Activated CD4-positive, alpha-beta T cell treated with anti-CD3 and anti-CD28 coated beads for 36 hours (primary cell): ENCODE measurements at regions of chr6 and their contacts with region 1.

Region 1: GRCh38 chr6:133512410-133513016 is 271.4 kb downstream of the EYA4 start:
- DNase-seq: peak; percentile 58
- ATAC-seq: no peak
- H3K4me3 Mint-ChIP-seq: no peak overlapping the region
- H3K27ac Mint-ChIP-seq: no peak overlapping the region
- H3K4me1 Mint-ChIP-seq: no peaks in the 10 kb centered on the region
- H3K27me3 Mint-ChIP-seq: peaks cover 21% of the 10 kb centered on the region

Region 2: GRCh38 chr6:132820629-132821381 is 691.7 kb before region 1 on chr6:
- CTCF ChIA-PET with region 1: no interaction called
- POLR2A ChIA-PET with region 1: no interaction called
- intact Hi-C with region 1: loop called (anchors 2 to 5 kb)
- DNase-seq: no peak
- ATAC-seq: peak; percentile 10
- H3K4me3 Mint-ChIP-seq: no peak overlapping the region
- H3K27ac Mint-ChIP-seq: peak overlapping the region; percentile 61
- H3K4me1 Mint-ChIP-seq: peaks cover 48% of the 10 kb centered on the region
- H3K27me3 Mint-ChIP-seq: no peaks in the 10 kb centered on the region

Region 3: DNA sequence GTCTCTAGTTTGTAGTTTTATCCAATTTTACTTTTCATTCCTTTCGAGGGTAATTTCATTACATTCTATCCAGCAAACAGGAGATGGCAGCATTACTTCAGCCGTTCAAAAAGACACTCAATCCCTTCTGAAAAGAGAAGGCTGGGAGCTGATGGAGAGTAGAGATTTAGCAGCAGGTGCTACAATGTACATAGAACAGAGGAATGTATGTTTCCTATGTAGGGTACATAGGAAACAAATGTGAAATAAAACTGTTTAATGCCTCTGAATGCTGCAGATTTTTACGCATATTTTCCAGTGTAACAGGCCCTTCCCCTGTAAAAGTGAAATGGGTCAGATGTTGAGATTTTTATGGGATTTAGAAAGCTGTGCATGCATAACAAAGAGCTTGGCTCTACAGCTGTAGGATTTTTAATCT is 682.2 kb before region 1 on chr6:
- CTCF ChIA-PET with region 1: interaction called, 3 read pairs
- POLR2A ChIA-PET with region 1: no interaction called
- intact Hi-C with region 1: loop called in 1 of 2 experiments (anchors 2 kb)
- DNase-seq: peak; percentile 8
- ATAC-seq: no peak
- H3K4me3 Mint-ChIP-seq: no peak overlapping the region
- H3K27ac Mint-ChIP-seq: no peak overlapping the region
- H3K4me1 Mint-ChIP-seq: no peaks in the 10 kb centered on the region
- H3K27me3 Mint-ChIP-seq: peaks cover 2% of the 10 kb centered on the region

Region 4: DNA sequence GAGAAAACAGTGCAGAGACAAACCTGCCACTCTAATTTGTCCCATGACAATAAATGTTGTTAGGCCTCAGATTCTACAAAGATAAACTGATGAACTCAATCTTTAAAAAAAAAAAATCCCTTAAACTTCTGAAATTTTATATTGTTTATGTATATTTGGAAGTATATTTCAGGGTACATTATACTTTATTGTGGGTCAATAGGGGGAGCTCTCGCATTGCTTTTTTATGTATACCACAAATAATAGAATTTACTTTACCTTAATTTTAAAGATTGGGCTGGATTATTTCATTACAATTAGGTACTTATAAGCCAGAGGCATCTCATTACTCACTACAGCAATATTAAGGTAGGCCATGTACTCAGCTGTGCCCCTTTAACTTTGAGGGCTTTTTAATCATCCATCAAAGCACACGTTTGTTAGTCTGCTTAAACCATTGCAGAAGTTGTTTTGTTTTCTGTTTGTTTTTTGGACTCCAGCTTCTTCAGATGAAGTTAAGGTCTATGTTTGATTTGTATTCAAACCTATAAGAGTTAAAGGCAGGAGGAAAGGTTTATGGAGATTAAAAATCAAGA is 327.6 kb before region 1 on chr6:
- CTCF ChIA-PET with region 1: interaction called, 3 read pairs
- POLR2A ChIA-PET with region 1: no interaction called
- intact Hi-C with region 1: loop called (anchors 1 to 2 kb)
- DNase-seq: no peak
- ATAC-seq: no peak
- H3K4me3 Mint-ChIP-seq: no peak overlapping the region
- H3K27ac Mint-ChIP-seq: no peak overlapping the region
- H3K4me1 Mint-ChIP-seq: no peaks in the 10 kb centered on the region
- H3K27me3 Mint-ChIP-seq: peaks cover 3% of the 10 kb centered on the region

Region 5: DNA sequence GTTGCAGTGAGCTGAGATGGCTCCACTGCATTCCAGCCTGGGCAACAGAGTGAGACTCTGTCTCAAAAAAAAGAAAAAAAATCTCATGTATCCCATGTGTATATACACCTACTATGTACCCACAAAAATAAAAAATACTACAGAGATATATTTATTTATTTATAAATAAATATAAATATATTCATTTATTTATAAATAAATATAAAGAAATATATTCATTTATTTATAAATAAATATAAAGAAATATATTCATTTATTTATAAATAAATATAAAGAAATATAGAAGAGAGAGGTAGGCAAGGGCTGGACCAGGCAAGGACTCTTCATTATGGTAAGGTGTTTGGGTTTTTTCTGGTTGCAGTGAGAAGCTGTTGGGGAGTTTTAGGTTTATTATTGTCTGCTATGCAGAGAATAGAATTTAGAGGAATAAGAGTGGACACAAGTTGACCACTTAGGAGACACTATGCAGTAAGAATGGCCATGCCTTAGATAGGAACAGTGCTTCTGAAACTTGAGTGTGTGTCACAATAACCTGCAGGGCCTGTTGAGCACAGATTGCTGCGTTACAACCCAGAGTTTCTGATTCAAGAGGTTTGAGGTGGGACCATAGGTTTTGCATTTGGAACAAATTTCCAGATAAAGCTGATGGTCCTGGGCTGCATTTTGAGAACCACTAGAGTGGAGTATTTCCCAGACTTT is 17.2 kb before region 1 on chr6:
- CTCF ChIA-PET with region 1: no interaction called
- POLR2A ChIA-PET with region 1: no interaction called
- intact Hi-C with region 1: no loop called
- DNase-seq: no peak
- ATAC-seq: no peak
- H3K4me3 Mint-ChIP-seq: no peak overlapping the region
- H3K27ac Mint-ChIP-seq: no peak overlapping the region
- H3K4me1 Mint-ChIP-seq: no peaks in the 10 kb centered on the region
- H3K27me3 Mint-ChIP-seq: no peaks in the 10 kb centered on the region